ENCODE measurements at regions of chr3 and their contacts with region 1.

Region 1: GRCh38 chr3:184174646-184175492 is at the start of gene AP2M1:
- DNase-seq: peak; percentile 98 to 99 (median 98)
- ATAC-seq: peak; percentile 98
- H3K4me3 ChIP-seq: peak within 1 kb of the TSS; percentile 82
- H3K4me3 Mint-ChIP-seq: peak within 1 kb of the TSS; percentile 89 to 98 (median 96)
- H3K27ac ChIP-seq: peak within 1 kb of the TSS; percentile 95
- H3K27ac Mint-ChIP-seq: peak within 1 kb of the TSS; percentile 75 to 94 (median 90)
- H3K4me1 ChIP-seq: peaks cover 18 to 20% of the 10 kb centered on the region in 2 donors
- H3K4me1 Mint-ChIP-seq: peaks cover 14 to 46% (median 38%) of the 10 kb centered on the region in 7 donors
- H3K27me3 ChIP-seq: no peaks in the 10 kb centered on the region
- H3K27me3 Mint-ChIP-seq: no peaks in the 10 kb centered on the region
- total RNA-seq, gene AP2M1: 111 to 217 (median 185) TPM

Region 2: DNA sequence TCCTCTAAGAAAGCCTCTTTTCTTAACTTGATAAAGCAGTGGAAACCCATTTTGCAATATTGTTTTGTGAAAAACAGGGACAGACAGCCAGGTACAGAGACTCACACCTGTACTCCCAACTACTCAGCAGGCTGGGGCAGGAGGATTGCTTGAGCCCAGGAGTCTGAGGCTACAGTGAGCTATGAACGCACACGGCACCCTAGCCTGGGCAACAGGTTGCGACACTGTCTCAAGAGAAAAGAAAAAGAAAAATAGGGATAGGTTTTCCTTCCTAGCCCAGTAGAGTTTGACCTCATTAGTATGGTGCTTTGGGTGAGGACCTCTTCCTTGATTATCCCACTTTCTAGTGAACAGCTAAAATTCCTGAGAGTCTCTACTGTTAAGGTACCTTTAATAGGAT is 494.8 kb before region 1 on chr3:
- CTCF ChIA-PET with region 1: no interaction called
- POLR2A ChIA-PET with region 1: no interaction called
- intact Hi-C with region 1: no loop called
- DNase-seq: no peak
- ATAC-seq: no peak
- H3K4me3 ChIP-seq: no peak overlapping the region
- H3K4me3 Mint-ChIP-seq: no peak overlapping the region
- H3K27ac ChIP-seq: no peak overlapping the region
- H3K27ac Mint-ChIP-seq: peak overlapping the region in 3 of 9 donors; percentile 35 to 67 (median 66)
- H3K4me1 ChIP-seq: no peaks in the 10 kb centered on the region
- H3K4me1 Mint-ChIP-seq: peaks cover 0 to 1% (median 0%) of the 10 kb centered on the region in 7 donors
- H3K27me3 ChIP-seq: no peaks in the 10 kb centered on the region
- H3K27me3 Mint-ChIP-seq: no peaks in the 10 kb centered on the region

Region 3: DNA sequence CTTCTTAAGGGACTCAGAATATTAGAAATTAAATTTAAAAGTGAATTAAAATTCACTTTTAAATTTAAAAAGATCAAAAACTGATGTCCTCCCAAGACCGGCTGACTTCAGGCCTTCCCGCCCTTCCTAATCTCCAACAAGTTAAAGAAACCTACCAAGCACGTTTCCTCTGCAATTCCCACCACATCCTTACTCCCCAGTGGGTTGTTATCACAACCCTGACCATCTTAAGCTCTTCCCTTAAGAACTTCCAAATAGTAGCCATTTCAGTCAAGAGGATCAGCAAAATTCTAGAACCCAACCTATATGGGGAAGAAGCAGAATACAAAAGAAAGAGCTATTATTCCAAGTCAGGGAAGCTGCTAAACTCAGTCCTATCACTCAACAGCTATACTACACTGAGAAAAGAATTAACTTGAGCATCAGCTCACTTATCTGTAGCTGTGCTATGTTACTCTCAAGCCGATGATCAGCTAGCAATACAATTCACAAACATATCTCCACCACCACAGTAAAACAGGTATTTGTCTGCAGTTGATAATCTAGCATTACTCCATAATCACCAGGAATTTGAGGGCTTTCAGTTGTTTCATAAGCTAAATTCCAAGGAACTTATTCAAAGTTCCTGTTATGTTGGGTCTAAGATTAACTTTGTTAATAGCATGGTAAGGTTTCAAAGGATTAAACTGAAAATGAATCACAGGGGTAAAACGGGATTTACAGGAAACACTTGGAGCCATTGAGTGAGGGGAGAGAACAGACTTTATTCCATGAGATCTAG is 171.5 kb before region 1 on chr3:
- CTCF ChIA-PET with region 1: no interaction called
- POLR2A ChIA-PET with region 1: no interaction called
- intact Hi-C with region 1: no loop called
- DNase-seq: no peak
- ATAC-seq: no peak
- H3K4me3 ChIP-seq: no peak overlapping the region
- H3K4me3 Mint-ChIP-seq: no peak overlapping the region
- H3K27ac ChIP-seq: no peak overlapping the region
- H3K27ac Mint-ChIP-seq: no peak overlapping the region
- H3K4me1 ChIP-seq: no peaks in the 10 kb centered on the region
- H3K4me1 Mint-ChIP-seq: peaks cover 10 to 12% (median 11%) of the 10 kb centered on the region in 7 donors
- H3K27me3 ChIP-seq: no peaks in the 10 kb centered on the region
- H3K27me3 Mint-ChIP-seq: no peaks in the 10 kb centered on the region

Region 4: DNA sequence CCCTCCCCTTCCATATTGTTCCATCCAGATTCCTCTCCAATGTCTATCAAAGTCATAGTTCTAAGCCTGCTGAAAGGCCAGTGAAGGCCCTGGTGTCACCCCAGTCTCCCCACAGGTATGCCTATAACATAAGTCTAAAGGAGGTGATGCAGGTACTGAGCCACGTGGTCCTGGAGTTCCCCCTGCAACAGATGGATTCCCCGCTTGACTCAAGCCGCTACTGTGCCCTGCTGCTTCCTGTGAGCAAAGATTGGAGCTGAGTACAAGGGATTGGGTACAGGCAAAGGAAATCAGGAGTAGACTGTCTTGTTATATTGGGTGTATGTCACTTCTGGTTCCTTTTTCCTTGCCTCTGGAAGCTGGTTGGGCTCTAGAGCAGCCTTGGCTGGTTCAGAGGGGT is 31.5 kb before region 1 on chr3:
- CTCF ChIA-PET with region 1: no interaction called
- POLR2A ChIA-PET with region 1: no interaction called
- intact Hi-C with region 1: no loop called
- DNase-seq: no peak
- ATAC-seq: no peak
- H3K4me3 ChIP-seq: no peak overlapping the region
- H3K4me3 Mint-ChIP-seq: no peak overlapping the region
- H3K27ac ChIP-seq: no peak overlapping the region
- H3K27ac Mint-ChIP-seq: no peak overlapping the region
- H3K4me1 ChIP-seq: no peaks in the 10 kb centered on the region
- H3K4me1 Mint-ChIP-seq: peaks cover 0 to 8% (median 0%) of the 10 kb centered on the region in 7 donors
- H3K27me3 ChIP-seq: no peaks in the 10 kb centered on the region
- H3K27me3 Mint-ChIP-seq: no peaks in the 10 kb centered on the region

Region 5: GRCh38 chr3:184154885-184155643 is 19.8 kb before region 1 on chr3 and contains the start of gene DVL3:
- CTCF ChIA-PET with region 1: interaction called, 3 read pairs
- POLR2A ChIA-PET with region 1: interaction called, 13 read pairs
- intact Hi-C with region 1: loop called (anchors 1 kb)
- DNase-seq: peak in 7 of 9 donors; percentile 31 to 75 (median 39)
- ATAC-seq: peak; percentile 82
- H3K4me3 ChIP-seq: peak within 1 kb of the TSS; percentile 84
- H3K4me3 Mint-ChIP-seq: peak within 1 kb of the TSS; percentile 94 to 100 (median 96)
- H3K27ac ChIP-seq: peak within 1 kb of the TSS; percentile 60
- H3K27ac Mint-ChIP-seq: peak within 1 kb of the TSS; percentile 81 to 91 (median 87)
- H3K4me1 ChIP-seq: peaks cover 10 to 13% of the 10 kb centered on the region in 2 donors
- H3K4me1 Mint-ChIP-seq: peaks cover 14 to 39% (median 28%) of the 10 kb centered on the region in 7 donors
- H3K27me3 ChIP-seq: no peaks in the 10 kb centered on the region
- H3K27me3 Mint-ChIP-seq: no peaks in the 10 kb centered on the region
- total RNA-seq, gene DVL3: 32.0 to 45.3 (median 39.4) TPM

Measured in naive thymus-derived CD4-positive, alpha-beta T cell (primary cell).